ENCODE measurements at regions of chr4 and their contacts with region 1.

Region 1: DNA sequence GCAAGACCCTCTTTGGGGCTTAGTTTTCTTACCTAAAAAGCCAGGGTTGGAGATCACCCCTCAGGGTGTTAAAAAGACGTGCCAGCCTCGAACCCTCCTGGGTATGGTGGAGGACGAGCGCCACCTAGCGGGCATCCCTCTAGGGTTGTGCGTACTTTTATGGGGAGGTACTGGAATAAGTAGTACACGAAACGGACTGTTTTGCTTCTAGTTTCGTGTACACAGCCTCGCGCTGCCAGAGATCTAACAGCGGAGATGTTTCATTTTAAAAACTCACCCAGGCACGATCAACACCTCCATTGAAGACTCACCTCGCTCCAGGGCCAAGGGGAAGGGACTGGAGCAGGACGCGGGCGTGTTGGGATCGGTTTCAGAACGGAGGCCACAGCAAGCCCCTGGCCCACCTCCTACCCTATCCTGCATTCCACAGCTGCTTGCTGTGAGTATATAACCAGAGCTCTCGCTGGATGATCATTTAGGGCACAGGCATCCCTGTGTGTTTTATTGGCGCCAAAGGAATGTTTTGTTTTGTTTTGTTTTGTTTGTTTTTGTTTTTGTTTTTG is 4.8 kb upstream of the NKX3-2 start:
- DNase-seq: peak; percentile 86
- ATAC-seq: peak; percentile 71 to 82
- H3K4me3 ChIP-seq: peak overlapping the region; percentile 31
- H3K27ac ChIP-seq: no peak overlapping the region
- H3K4me1 ChIP-seq: peaks cover 37% of the 10 kb centered on the region
- H3K27me3 ChIP-seq: peaks cover 68% of the 10 kb centered on the region
- CTCF ChIP-seq: peak; percentile 89

Region 2: GRCh38 chr4:12729384-12729783 is 819.7 kb before region 1 on chr4:
- intact Hi-C with region 1: loop called (anchors 10 kb)
- DNase-seq: no peak
- ATAC-seq: no peak
- H3K4me3 ChIP-seq: no peak overlapping the region
- H3K27ac ChIP-seq: no peak overlapping the region
- H3K4me1 ChIP-seq: no peaks in the 10 kb centered on the region
- H3K27me3 ChIP-seq: no peaks in the 10 kb centered on the region
- CTCF ChIP-seq: peak; percentile 27

Region 3: GRCh38 chr4:12852338-12853307 is 696.4 kb before region 1 on chr4:
- intact Hi-C with region 1: loop called (anchors 10 kb)
- DNase-seq: no peak
- ATAC-seq: peak in 1 of 2 donors; percentile 53
- H3K4me3 ChIP-seq: no peak overlapping the region
- H3K27ac ChIP-seq: no peak overlapping the region
- H3K4me1 ChIP-seq: no peaks in the 10 kb centered on the region
- H3K27me3 ChIP-seq: peaks cover 9% of the 10 kb centered on the region
- CTCF ChIP-seq: peak; percentile 45

Region 4: DNA sequence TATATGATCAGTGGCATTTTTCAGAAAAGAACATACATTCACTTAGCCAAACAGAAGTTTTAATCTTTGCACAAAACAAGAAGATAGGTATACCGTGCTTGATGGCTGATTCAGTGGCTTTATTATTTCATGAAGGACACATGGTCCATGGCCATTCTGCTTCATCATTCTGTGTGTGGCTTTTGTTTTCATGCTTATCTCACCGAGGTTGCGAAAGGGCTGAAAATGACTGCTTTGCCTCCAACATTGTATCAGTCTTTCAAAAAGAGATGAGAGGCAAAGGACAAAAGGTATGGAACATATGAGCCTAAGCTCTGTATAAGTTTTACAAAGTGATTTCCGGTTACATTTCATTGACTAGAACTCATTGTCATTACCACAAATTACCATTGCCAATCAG is 606.0 kb before region 1 on chr4:
- intact Hi-C with region 1: no loop called
- DNase-seq: no peak
- ATAC-seq: no peak
- H3K4me3 ChIP-seq: no peak overlapping the region
- H3K27ac ChIP-seq: no peak overlapping the region
- H3K4me1 ChIP-seq: no peaks in the 10 kb centered on the region
- H3K27me3 ChIP-seq: no peaks in the 10 kb centered on the region
- CTCF ChIP-seq: no peak

Region 5: DNA sequence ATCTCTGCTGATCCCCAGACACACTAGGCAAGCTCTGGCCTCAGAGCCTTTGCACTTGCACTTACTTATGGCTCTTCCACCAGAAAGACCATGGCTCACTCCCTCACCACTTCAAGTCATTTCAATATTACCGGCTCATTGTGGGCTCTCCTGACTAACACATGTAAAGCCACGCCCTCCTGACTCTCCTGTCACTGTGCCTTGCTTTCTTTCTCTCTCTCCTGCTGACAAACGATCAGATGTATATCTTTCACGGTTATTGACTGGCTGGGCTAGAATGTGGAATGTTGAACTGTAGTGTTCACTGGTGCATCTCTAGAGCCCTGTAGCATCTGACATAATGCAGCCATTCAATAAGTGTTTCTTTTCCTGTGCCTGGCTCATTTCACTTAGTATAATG is 490.0 kb before region 1 on chr4:
- intact Hi-C with region 1: no loop called
- DNase-seq: no peak
- ATAC-seq: no peak
- H3K4me3 ChIP-seq: no peak overlapping the region
- H3K27ac ChIP-seq: no peak overlapping the region
- H3K4me1 ChIP-seq: no peaks in the 10 kb centered on the region
- H3K27me3 ChIP-seq: no peaks in the 10 kb centered on the region
- CTCF ChIP-seq: no peak

Region 6: GRCh38 chr4:13355111-13355880 is 193.8 kb before region 1 on chr4:
- intact Hi-C with region 1: no loop called
- DNase-seq: no peak
- ATAC-seq: no peak
- H3K4me3 ChIP-seq: no peak overlapping the region
- H3K27ac ChIP-seq: no peak overlapping the region
- H3K4me1 ChIP-seq: no peaks in the 10 kb centered on the region
- H3K27me3 ChIP-seq: no peaks in the 10 kb centered on the region
- CTCF ChIP-seq: no peak

Measured in lower lobe of right lung (tissue), 2 donors.